GM12878 (cell line): ENCODE measurements at regions of chr18 and their contacts with region 1.

Region 1: DNA sequence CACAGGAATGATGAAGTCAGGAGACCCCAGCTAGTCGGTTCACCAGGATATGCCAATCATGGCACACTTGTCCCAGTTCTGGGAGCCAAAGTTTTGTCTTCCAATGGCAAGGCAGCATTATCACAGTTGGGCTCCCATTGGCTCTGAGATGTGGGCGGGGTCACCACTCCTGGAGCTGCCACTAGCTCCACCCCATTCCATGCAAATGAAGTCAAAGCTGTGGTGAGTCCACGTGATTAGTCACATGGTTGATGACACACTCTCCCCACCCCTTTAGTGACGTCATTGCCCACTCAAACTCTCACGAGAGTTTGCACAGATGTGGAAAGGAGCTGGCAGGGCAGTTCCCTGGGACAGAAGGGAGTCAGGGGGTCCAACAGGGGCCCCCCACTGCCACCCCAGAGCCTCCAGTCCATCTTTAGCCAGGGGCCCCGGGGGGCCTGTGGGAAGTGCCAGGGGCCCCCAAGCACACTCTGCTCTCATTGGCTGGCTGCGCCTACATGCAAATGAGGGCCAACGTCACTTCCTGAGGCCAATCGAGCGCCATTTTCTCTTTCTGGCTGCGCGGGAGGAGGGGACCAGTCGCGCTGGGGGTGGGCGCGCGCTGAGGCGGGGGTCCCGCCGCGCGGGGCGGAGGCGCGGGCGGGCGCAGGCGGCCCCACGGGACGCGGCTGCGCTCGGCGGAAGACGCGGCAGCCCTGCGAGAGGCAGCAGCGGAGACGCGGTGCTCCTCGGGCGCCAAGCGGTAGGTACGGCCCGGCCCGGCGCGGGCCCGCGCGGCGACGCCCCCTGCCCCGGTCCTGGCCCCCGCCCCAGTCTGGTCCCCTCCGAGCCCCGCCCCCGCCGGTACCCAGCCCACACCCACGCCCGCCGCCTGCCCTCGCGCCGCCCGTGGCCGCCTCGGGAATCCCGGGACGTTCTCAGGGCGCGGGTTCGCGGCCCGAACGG is at the start of gene ADNP2:
- DNase-seq: peak; percentile 75
- ATAC-seq: peak; percentile 78
- H3K4me3 ChIP-seq: peak within 1 kb of the TSS; percentile 83
- H3K27ac ChIP-seq: peak within 1 kb of the TSS; percentile 66
- H3K4me1 ChIP-seq: peaks cover 19% of the 10 kb centered on the region
- H3K27me3 ChIP-seq: no peaks in the 10 kb centered on the region
- CTCF ChIP-seq: no peak
- EP300 ChIP-seq: no peak
- POLR2A ChIP-seq: peak; percentile 89
- RAD21 ChIP-seq: no peak
- polyA plus RNA-seq, gene ADNP2: 6.9 to 13.1 TPM

Region 2: GRCh38 chr18:79964330-79965118 is 144.5 kb before region 1 on chr18 and contains the start of gene HSBP1L1:
- CTCF ChIA-PET with region 1: interaction called, 3 read pairs
- POLR2A ChIA-PET with region 1: no interaction called
- RAD21 ChIA-PET with region 1: interaction called, 3 read pairs
- SMC1A ChIA-PET with region 1: interaction called, 3 read pairs
- in situ Hi-C with region 1: no loop called
- intact Hi-C with region 1: loop called (anchors 5 kb)
- DNase-seq: no peak
- ATAC-seq: peak; percentile 67
- H3K4me3 ChIP-seq: peak within 1 kb of the TSS; percentile 37
- H3K27ac ChIP-seq: peak within 1 kb of the TSS; percentile 68
- H3K4me1 ChIP-seq: peaks cover 25% of the 10 kb centered on the region
- H3K27me3 ChIP-seq: no peaks in the 10 kb centered on the region
- CTCF ChIP-seq: peak in 2 of 3 experiments; percentile 10 to 19; a peak in 1 of 6 replicates
- EP300 ChIP-seq: no peak
- POLR2A ChIP-seq: peak; percentile 81
- RAD21 ChIP-seq: no peak
- polyA plus RNA-seq, gene HSBP1L1: 0.97 to 2.1 TPM

Region 3: GRCh38 chr18:80034068-80034851 is 74.7 kb before region 1 on chr18 and contains the start of gene RBFA:
- CTCF ChIA-PET with region 1: interaction called, 4 read pairs
- POLR2A ChIA-PET with region 1: interaction called, 3 read pairs
- RAD21 ChIA-PET with region 1: interaction called, 5 read pairs
- SMC1A ChIA-PET with region 1: interaction called, 9 read pairs
- in situ Hi-C with region 1: no loop called
- intact Hi-C with region 1: loop called (anchors 1 kb)
- DNase-seq: peak; percentile 94
- ATAC-seq: peak; percentile 88
- H3K4me3 ChIP-seq: peak within 1 kb of the TSS; percentile 79
- H3K27ac ChIP-seq: peak within 1 kb of the TSS; percentile 64
- H3K4me1 ChIP-seq: peaks cover 3% of the 10 kb centered on the region; the same call in 1 of the 2 replicates
- H3K27me3 ChIP-seq: no peaks in the 10 kb centered on the region
- CTCF ChIP-seq: peak in 2 of 3 experiments; percentile 11 to 23; a peak in 2 of 6 replicates
- EP300 ChIP-seq: 0 out of 4 replicates have a peak, but pooled peaks of 1 of the 2 experiments have one; percentile 18
- POLR2A ChIP-seq: peak; percentile 85
- RAD21 ChIP-seq: no peak
- polyA plus RNA-seq, gene RBFA: 7.2 to 9.1 TPM

Region 4: DNA sequence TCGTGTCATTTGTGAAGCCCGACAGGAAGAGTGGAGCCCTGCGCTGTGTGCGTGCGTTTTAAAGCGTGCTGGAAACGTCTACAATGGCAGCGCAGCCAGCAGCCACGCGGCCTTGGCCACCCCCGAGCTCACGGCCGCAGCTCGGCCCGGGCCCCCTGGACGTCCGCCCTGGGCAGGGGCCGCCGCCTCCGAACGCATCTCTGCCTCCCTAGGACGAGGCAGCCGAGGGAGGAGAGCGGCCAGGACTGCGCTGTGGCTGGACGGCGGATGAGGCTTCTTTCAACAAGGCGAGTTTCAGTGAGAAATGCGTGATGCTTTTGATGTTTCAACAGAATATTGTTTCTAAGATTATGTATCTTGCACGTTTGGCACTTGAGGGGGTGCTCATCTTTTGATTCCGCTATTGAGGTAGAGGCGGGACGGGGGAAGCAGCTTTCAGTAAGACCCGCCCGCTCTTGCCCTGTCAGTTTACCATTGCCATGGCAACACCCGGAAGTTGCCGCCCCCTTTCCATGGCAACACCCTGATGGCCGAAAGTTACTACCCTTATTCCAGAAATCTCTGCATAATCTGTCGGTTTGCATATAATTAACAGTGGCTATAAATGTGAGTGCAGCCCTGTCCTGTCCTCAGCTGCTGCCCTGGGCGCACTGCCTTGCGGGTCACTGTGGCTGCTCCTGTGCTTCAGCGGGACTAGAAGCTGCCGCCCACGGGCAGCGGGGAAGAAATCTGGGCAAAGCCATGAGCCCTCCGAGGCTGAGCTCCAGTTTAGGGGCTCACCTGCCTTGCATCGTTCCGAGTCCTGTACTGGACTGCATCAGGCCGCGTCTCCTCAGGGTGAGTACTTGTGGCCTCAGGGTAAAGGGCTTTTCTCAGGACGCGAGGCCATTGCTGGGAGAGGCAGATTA is 38.7 kb after region 1 on chr18:
- CTCF ChIA-PET with region 1: interaction called, 3 read pairs
- POLR2A ChIA-PET with region 1: interaction called, 3 read pairs
- RAD21 ChIA-PET with region 1: no interaction called
- SMC1A ChIA-PET with region 1: interaction called, 8 read pairs
- in situ Hi-C with region 1: no loop called
- intact Hi-C with region 1: loop called (anchors 2 kb)
- DNase-seq: peak; percentile 60
- ATAC-seq: peak; percentile 96
- H3K4me3 ChIP-seq: peak overlapping the region; percentile 72
- H3K27ac ChIP-seq: no peak overlapping the region
- H3K4me1 ChIP-seq: peaks cover 5% of the 10 kb centered on the region
- H3K27me3 ChIP-seq: no peaks in the 10 kb centered on the region
- CTCF ChIP-seq: no peak
- EP300 ChIP-seq: no peak
- POLR2A ChIP-seq: peak; percentile 77; the same call in 1 of the 2 replicates
- RAD21 ChIP-seq: no peak

Region 5: GRCh38 chr18:80176334-80177073 is 67.5 kb after region 1 on chr18:
- CTCF ChIA-PET with region 1: no interaction called
- POLR2A ChIA-PET with region 1: no interaction called
- RAD21 ChIA-PET with region 1: no interaction called
- SMC1A ChIA-PET with region 1: no interaction called
- in situ Hi-C with region 1: no loop called
- intact Hi-C with region 1: no loop called
- DNase-seq: no peak
- ATAC-seq: no peak
- H3K4me3 ChIP-seq: no peak overlapping the region
- H3K27ac ChIP-seq: no peak overlapping the region
- H3K4me1 ChIP-seq: peaks cover 10% of the 10 kb centered on the region
- H3K27me3 ChIP-seq: no peaks in the 10 kb centered on the region; a peak in 1 of 4 replicates
- CTCF ChIP-seq: no peak
- EP300 ChIP-seq: no peak
- POLR2A ChIP-seq: no peak
- RAD21 ChIP-seq: no peak